Activated naive CD4-positive, alpha-beta T cell treated with anti-CD3 and anti-CD28 coated beads for 36 hours (primary cell): ENCODE measurements at regions of chr4 and their contacts with region 1.

Region 1: DNA sequence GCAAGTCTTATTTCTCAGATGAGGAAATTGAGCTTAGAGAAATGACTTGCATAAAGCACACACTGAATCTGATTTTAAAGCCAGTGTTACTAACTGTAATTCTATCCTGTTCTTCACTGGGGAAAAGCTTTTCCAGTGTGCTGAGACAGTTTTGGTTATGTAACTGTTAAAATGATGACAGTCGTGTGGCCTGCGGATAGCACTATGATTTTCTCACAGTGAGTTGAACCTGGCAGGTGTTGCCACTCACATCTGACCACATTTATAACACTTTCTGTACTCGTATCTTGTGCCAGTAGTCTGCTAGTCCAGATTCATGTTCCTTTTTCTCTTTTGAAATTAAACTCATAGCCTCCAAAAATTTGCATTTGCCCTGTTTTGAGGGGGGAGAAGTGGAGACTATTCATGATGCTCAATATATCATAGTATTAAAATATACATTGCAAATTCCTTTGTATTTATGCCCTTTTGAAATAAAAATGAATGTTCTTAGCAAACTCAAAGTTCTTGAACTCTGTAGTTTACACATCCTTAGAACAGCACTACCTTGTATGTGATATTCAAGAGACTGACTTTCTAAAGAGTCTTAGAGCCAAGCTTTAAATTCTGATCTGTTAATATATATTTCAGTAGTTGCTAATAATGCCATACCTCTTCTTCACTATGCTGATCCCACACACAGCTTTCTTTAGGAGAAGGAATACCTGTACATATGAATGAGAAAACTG is 132.3 kb downstream of the PDLIM5 start:
- DNase-seq: no peak
- H3K4me3 Mint-ChIP-seq: no peak overlapping the region
- H3K27ac Mint-ChIP-seq: no peak overlapping the region
- H3K4me1 Mint-ChIP-seq: no peaks in the 10 kb centered on the region
- H3K27me3 Mint-ChIP-seq: no peaks in the 10 kb centered on the region

Region 2: GRCh38 chr4:94595879-94596483 is 11.9 kb after region 1 on chr4:
- CTCF ChIA-PET with region 1: interaction called, 10 read pairs
- intact Hi-C with region 1: no loop called
- DNase-seq: no peak
- H3K4me3 Mint-ChIP-seq: no peak overlapping the region
- H3K27ac Mint-ChIP-seq: no peak overlapping the region
- H3K4me1 Mint-ChIP-seq: no peaks in the 10 kb centered on the region
- H3K27me3 Mint-ChIP-seq: no peaks in the 10 kb centered on the region